ENCODE measurements at regions of chr7 and their contacts with region 1.

Region 1: GRCh38 chr7:65872776-65873581 is at the start of gene VKORC1L1:
- DNase-seq: peak; percentile 76 to 97
- H3K4me3 ChIP-seq: peak within 1 kb of the TSS; percentile 72
- H3K27ac ChIP-seq: no peak within 1 kb of the TSS
- H3K4me1 ChIP-seq: peaks cover 6% of the 10 kb centered on the region; the same call in 1 of the 2 replicates
- H3K27me3 ChIP-seq: no peaks in the 10 kb centered on the region
- CTCF ChIP-seq: no peak
- total RNA-seq, gene VKORC1L1: 21.6 and 31.7 TPM in 2 replicates

Region 2: DNA sequence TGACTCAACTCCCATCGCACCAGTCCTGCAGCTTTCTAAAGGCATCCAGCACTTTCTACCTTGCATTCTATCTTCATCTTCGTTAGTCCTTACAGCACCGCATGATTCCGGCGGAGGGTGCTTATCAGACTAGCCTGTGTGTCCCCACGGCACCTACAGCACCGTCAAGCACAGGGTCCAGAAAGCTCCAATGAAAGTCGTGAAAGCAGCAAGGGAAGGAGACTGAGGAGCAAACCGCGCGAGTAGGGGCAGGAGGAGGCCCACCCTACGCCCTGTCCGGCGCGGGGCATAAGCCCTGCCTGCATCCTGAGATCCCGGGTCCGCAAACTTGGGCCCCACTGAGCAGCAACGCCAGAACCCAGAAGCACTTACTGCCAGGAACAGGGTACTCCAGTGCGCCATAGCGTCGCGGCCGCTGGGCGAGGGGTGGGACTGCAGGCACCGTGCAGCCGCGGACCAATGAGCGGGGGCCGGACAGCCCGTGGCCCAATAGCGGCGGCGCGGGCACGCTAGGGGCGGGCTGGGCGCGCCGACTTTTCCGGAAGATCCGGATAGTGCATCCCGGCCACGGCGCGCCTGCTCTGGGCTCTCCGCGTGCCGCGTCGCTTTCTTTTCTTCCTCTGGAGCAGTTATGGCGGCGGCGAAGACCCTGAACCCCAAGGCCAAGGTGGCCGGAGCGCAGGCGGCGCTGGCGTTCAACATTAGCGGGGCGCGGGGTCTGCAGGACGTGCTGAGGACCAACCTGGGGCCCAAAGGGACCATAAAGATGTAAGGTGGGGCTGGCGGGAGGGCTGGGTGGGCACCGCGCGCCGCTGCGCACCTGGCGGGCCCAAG is 122.3 kb before region 1 on chr7:
- CTCF ChIA-PET with region 1: no interaction called
- POLR2A ChIA-PET with region 1: no interaction called
- intact Hi-C with region 1: loop called (anchors 10 kb)
- DNase-seq: peak; percentile 76 to 92
- H3K4me3 ChIP-seq: peak overlapping the region; percentile 99
- H3K27ac ChIP-seq: 0 out of 2 replicates have a peak overlapping the region, but pooled peaks have one; percentile 23
- H3K4me1 ChIP-seq: peaks cover 16% of the 10 kb centered on the region
- H3K27me3 ChIP-seq: no peaks in the 10 kb centered on the region
- CTCF ChIP-seq: no peak; the same call in 1 of the 2 replicates